ENCODE measurements at regions of chr17 and their contacts with region 1.

Region 1: DNA sequence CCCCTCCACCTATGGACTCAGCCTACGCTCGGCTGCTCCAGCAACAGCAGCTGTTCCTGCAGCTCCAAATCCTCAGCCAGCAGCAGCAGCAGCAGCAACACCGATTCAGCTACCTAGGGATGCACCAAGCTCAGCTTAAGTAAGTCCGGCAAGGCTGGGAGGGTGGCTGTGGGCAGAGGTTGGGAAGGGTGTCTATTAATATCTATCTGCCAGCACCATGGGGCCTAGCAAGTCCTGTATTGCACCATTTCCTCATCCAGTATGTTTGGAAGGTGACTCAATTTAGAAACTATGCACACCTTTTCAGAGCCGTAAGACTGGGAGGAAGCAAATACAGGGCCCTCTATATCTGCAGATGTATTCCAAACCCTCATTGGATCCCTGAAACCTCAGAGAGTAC is 45.0 kb upstream of the ARHGAP44 start:
- H3K4me3 ChIP-seq: no peak overlapping the region
- H3K27ac ChIP-seq: no peak overlapping the region
- H3K4me1 ChIP-seq: peaks cover 2% of the 10 kb centered on the region; the same call in 1 of the 2 replicates
- CTCF ChIP-seq: no peak

Region 2: DNA sequence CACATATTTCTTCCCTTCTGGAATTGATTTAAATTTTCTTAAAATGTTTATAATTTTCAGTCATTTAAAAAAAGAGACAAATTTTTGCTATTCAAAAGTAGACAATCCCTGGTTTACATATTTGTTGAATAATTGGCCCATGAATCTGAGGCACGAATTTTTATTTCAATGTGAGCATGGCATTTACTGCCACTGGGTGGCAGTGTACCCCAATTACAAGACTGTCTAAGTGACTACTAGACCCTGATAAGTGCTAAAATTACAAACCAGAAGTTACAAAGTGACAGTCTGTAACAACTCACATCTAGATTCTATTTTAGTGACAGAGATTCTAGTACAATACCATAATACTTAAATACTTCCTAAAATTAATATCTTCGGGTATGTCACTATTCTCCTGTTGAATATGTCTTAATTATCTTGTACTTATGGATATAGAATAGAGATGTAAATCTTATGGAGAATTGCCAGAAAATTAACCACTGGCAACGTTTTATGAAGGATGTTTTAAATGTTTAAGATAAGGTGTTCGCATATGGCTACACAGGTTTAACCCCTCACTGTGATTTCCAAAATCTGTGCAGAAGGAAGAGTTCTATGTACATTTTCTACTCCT is 487.8 kb before region 1 on chr17:
- CTCF ChIA-PET with region 1: interaction called, 29 read pairs
- POLR2A ChIA-PET with region 1: no interaction called
- H3K4me3 ChIP-seq: no peak overlapping the region
- H3K27ac ChIP-seq: no peak overlapping the region
- H3K4me1 ChIP-seq: no peaks in the 10 kb centered on the region
- CTCF ChIP-seq: peak; percentile 25; the same call in 1 of the 2 replicates

Region 3: DNA sequence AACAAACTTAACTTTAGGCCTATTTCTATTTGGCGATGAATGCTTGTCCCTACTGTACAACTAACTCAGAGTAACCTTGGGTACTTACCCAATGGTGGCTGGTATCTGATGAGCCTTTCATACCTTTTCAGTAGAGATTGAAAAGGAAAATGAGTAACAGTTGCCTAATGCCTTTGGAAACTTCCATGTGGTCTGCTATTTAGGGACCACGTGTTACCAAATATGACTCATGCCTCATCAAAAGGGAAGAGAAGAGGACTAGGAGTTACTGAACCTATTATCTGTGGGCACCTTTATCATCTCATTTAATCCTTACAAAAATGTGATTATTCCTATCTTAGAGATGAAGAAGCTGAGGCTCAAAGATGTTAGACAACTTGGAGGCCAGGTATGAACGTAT is 70.5 kb before region 1 on chr17:
- CTCF ChIA-PET with region 1: interaction called, 13 read pairs
- POLR2A ChIA-PET with region 1: no interaction called
- H3K4me3 ChIP-seq: no peak overlapping the region
- H3K27ac ChIP-seq: no peak overlapping the region
- H3K4me1 ChIP-seq: no peaks in the 10 kb centered on the region
- CTCF ChIP-seq: no peak

Region 4: DNA sequence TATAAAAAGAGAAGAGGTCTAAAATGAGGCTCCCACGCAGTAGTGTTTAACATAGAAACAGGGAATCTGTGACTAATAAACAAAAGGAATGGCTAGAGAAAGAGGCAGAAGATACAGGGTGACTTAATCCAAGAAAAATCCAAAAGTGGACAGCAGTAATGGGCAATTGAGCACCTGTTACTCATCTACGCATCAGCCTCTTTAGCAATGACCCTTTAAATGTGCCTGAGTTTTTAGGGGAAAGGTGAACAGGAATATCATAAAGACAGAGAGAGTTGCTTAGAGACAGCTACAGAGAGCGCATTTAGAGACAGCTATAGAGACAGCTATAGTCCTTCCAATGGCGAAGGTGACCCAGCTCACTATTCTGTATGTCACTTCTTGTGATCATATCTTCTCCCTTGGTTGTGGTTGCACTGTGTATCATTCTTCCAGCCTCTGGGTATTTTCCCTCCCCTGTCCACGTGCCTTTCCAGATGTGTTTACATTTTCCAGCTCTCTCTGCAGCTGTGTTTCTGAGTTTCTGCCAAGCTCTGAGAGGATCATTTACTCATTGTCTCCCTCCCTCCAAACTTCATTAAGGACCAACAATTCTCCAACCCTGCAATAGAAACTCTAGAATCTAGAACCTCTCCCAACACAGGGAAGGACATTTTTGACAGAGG is 17.1 kb before region 1 on chr17:
- CTCF ChIA-PET with region 1: interaction called, 17 read pairs
- POLR2A ChIA-PET with region 1: no interaction called
- H3K4me3 ChIP-seq: no peak overlapping the region
- H3K27ac ChIP-seq: no peak overlapping the region
- H3K4me1 ChIP-seq: peaks cover 2% of the 10 kb centered on the region; the same call in 1 of the 2 replicates
- CTCF ChIP-seq: no peak

Region 5: DNA sequence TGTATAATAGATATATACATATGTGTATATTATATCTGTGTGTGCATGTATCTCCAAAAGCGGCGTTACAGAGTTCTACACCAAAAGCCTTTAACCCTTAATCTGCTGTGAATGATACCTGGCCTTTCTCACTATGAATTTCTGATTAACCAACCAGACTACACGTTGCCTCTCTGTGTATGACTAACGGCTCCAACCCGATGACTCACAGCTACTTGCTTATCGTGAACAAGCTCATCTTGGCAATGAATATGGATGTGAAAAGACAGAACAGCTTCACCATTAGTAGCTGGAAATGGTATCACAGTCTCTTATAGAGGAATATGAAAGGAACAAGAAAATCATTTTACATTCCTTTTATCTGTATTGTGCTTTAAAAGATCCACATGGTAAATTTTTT is 21.2 kb after region 1 on chr17:
- CTCF ChIA-PET with region 1: interaction called, 10 read pairs
- POLR2A ChIA-PET with region 1: no interaction called
- H3K4me3 ChIP-seq: no peak overlapping the region
- H3K27ac ChIP-seq: no peak overlapping the region
- H3K4me1 ChIP-seq: peaks cover 6% of the 10 kb centered on the region; the same call in 1 of the 2 replicates
- CTCF ChIP-seq: no peak

Measured in HEK293 (cell line).